ENCODE measurements at regions of chr1 and their contacts with region 1.

Region 1: GRCh38 chr1:47333922-47334764 is 553 bp downstream of the CMPK1 start:
- DNase-seq: peak; percentile 63 to 82 (median 77)
- ATAC-seq: peak; percentile 93
- H3K4me3 ChIP-seq: peak overlapping the region; percentile 87
- H3K4me3 Mint-ChIP-seq: peak overlapping the region in 6 of 10 donors; percentile 90 to 94 (median 92)
- H3K27ac ChIP-seq: peak overlapping the region; percentile 92
- H3K27ac Mint-ChIP-seq: peak overlapping the region in 6 of 9 donors; percentile 76 to 94 (median 92)
- H3K4me1 ChIP-seq: peaks cover 6 to 16% of the 10 kb centered on the region in 2 donors
- H3K4me1 Mint-ChIP-seq: peaks cover 12 to 34% (median 22%) of the 10 kb centered on the region in 7 donors
- H3K27me3 ChIP-seq: no peaks in the 10 kb centered on the region
- H3K27me3 Mint-ChIP-seq: no peaks in the 10 kb centered on the region

Region 2: DNA sequence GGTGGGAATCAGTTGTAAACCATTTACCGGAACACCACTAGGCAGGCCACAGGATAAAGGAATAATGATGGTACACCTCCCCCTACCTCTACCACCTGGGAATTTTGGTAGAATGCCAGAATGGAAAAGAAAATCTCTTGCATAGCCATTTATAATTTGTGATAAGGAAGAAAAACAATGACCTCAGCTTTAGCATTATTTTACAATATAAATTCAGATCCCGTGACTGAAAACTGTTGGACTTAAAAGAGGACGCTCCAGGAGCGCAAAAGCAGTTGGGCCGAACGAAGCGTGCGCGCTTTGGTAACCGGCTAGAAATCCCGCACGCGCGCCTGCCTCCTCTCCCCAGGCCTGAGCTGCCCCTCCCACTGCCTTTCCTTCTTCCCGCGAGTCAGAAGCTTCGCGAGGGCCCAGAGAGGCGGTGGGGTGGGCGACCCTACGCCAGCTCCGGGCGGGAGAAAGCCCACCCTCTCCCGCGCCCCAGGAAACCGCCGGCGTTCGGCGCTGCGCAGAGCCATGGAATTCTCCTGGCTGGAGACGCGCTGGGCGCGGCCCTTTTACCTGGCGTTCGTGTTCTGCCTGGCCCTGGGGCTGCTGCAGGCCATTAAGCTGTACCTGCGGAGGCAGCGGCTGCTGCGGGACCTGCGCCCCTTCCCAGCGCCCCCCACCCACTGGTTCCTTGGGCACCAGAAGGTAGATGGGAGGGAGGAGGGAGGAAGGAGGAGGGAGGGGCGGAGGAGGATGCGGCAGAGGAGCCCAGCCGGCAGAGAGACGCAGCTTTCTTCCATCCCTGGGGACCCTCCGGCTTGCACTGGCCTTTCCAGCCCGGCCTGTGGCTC is 310.6 kb before region 1 on chr1 and contains the start of gene CYP4X1:
- CTCF ChIA-PET with region 1: no interaction called
- POLR2A ChIA-PET with region 1: no interaction called
- intact Hi-C with region 1: no loop called
- DNase-seq: no peak
- ATAC-seq: no peak
- H3K4me3 ChIP-seq: no peak within 1 kb of the TSS
- H3K4me3 Mint-ChIP-seq: no peak within 1 kb of the TSS
- H3K27ac ChIP-seq: no peak within 1 kb of the TSS
- H3K27ac Mint-ChIP-seq: no peak within 1 kb of the TSS
- H3K4me1 ChIP-seq: no peaks in the 10 kb centered on the region
- H3K4me1 Mint-ChIP-seq: peaks cover 0 to 4% (median 0%) of the 10 kb centered on the region in 7 donors
- H3K27me3 ChIP-seq: no peaks in the 10 kb centered on the region
- H3K27me3 Mint-ChIP-seq: peaks cover 38 to 63% (median 46%) of the 10 kb centered on the region in 5 donors
- total RNA-seq, gene CYP4X1: not detected

Region 3: GRCh38 chr1:47313915-47314664 is 20.1 kb before region 1 on chr1 and contains the start of gene STIL:
- CTCF ChIA-PET with region 1: interaction called, 6 read pairs
- POLR2A ChIA-PET with region 1: interaction called, 35 read pairs
- intact Hi-C with region 1: loop called (anchors 1 kb)
- DNase-seq: peak; percentile 87 to 96 (median 95)
- ATAC-seq: peak; percentile 98
- H3K4me3 ChIP-seq: peak within 1 kb of the TSS; percentile 73
- H3K4me3 Mint-ChIP-seq: peak within 1 kb of the TSS; percentile 84 to 98 (median 93)
- H3K27ac ChIP-seq: peak within 1 kb of the TSS; percentile 78
- H3K27ac Mint-ChIP-seq: peak within 1 kb of the TSS; percentile 88 to 98 (median 95)
- H3K4me1 ChIP-seq: no peaks in the 10 kb centered on the region
- H3K4me1 Mint-ChIP-seq: peaks cover 4 to 26% (median 13%) of the 10 kb centered on the region in 7 donors
- H3K27me3 ChIP-seq: no peaks in the 10 kb centered on the region
- H3K27me3 Mint-ChIP-seq: peaks cover 0 to 3% (median 0%) of the 10 kb centered on the region in 5 donors
- total RNA-seq, gene STIL: 1.3 to 28.5 (median 1.9) TPM